A549 (cell line): ENCODE measurements at regions of chr1 and their contacts with region 1.

Region 1: DNA sequence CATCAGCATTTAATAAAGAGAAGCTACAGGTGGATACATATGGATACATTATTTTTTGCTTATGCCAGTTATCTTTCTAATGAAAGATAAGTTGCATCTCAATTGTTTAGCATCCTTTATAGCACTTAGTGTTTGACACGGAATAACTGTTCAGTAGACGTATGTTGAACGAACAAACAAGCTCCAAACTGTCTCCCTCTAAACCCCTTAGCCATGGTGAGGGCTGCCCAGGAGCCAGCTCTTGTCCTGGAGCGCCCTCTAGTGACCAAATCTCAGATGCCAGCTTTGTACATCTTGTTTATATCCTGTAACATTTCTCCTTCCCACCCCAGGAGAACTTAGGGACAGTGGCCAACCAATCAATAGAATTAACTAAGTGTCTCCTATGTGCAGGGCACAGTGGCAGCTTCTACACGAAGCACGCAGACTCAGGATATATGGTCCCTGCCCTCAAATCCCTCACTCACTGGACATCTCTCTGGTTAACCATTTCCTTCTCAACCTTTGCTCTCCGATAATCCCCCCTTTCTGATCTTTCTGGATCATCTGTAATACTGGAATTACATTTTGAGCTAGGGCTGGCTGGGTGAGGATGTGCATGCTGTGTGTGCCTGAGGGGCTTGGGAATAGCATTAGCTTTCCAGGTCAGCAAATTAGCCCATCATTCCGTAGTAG is 22.9 kb downstream of the KCNA10 start:
- DNase-seq: peak; percentile 66 to 72
- ATAC-seq: peak; percentile 87 to 97
- H3K4me3 ChIP-seq: no peak overlapping the region
- H3K27ac ChIP-seq: no peak overlapping the region
- H3K4me1 ChIP-seq: no peaks in the 10 kb centered on the region
- CTCF ChIP-seq: peak; percentile 89
- EP300 ChIP-seq: no peak
- POLR2A ChIP-seq: no peak
- RAD21 ChIP-seq: peak; percentile 91 to 97

Region 2: GRCh38 chr1:110196917-110197765 is 298.9 kb before region 1 on chr1:
- CTCF ChIA-PET with region 1: interaction called, 165 read pairs
- POLR2A ChIA-PET with region 1: no interaction called
- DNase-seq: peak; percentile 50 to 77
- ATAC-seq: peak; percentile 83 to 96
- H3K4me3 ChIP-seq: no peak overlapping the region
- H3K27ac ChIP-seq: no peak overlapping the region
- H3K4me1 ChIP-seq: no peaks in the 10 kb centered on the region
- CTCF ChIP-seq: peak; percentile 65
- EP300 ChIP-seq: no peak
- POLR2A ChIP-seq: no peak
- RAD21 ChIP-seq: peak; percentile 51 to 62

Region 3: GRCh38 chr1:110338886-110339406 is 157.1 kb before region 1 on chr1 and contains the start of gene RBM15:
- CTCF ChIA-PET with region 1: interaction called, 21 read pairs
- POLR2A ChIA-PET with region 1: no interaction called
- DNase-seq: peak; percentile 89 to 100
- ATAC-seq: peak; percentile 75 to 87
- H3K4me3 ChIP-seq: peak within 1 kb of the TSS; percentile 91
- H3K27ac ChIP-seq: peak within 1 kb of the TSS; percentile 96 to 99
- H3K4me1 ChIP-seq: peaks cover 58% of the 10 kb centered on the region
- CTCF ChIP-seq: no peak
- EP300 ChIP-seq: no peak
- POLR2A ChIP-seq: no peak
- RAD21 ChIP-seq: no peak
- polyA plus RNA-seq, gene RBM15: 14.0 and 15.0 TPM in 2 replicates

Region 4: GRCh38 chr1:110433803-110434202 is 62.3 kb before region 1 on chr1:
- CTCF ChIA-PET with region 1: interaction called, 17 read pairs
- POLR2A ChIA-PET with region 1: no interaction called
- DNase-seq: peak; percentile 54 to 64
- ATAC-seq: peak; percentile 96 to 97
- H3K4me3 ChIP-seq: no peak overlapping the region
- H3K27ac ChIP-seq: peak overlapping the region; percentile 20 to 73; a peak in 4 of 6 replicates
- H3K4me1 ChIP-seq: peaks cover 12% of the 10 kb centered on the region
- CTCF ChIP-seq: peak; percentile 11; the same call in 1 of the 3 replicates
- EP300 ChIP-seq: no peak
- POLR2A ChIP-seq: no peak
- RAD21 ChIP-seq: 0 out of 5 replicates have a peak, but pooled peaks of 1 of the 2 experiments have one; percentile 29

Region 5: GRCh38 chr1:110460253-110461220 is 35.5 kb before region 1 on chr1:
- CTCF ChIA-PET with region 1: interaction called, 256 read pairs
- POLR2A ChIA-PET with region 1: no interaction called
- DNase-seq: peak; percentile 55 to 67
- ATAC-seq: peak; percentile 60 to 83
- H3K4me3 ChIP-seq: no peak overlapping the region
- H3K27ac ChIP-seq: no peak overlapping the region
- H3K4me1 ChIP-seq: peaks cover 27% of the 10 kb centered on the region
- CTCF ChIP-seq: peak; percentile 90
- EP300 ChIP-seq: no peak
- POLR2A ChIP-seq: no peak
- RAD21 ChIP-seq: peak; percentile 94 to 97

Region 6: GRCh38 chr1:110482662-110483307 is 13.3 kb before region 1 on chr1:
- CTCF ChIA-PET with region 1: interaction called, 43 read pairs
- POLR2A ChIA-PET with region 1: interaction called, 4 read pairs
- DNase-seq: no peak
- ATAC-seq: no peak; a peak in 1 of 6 replicates
- H3K4me3 ChIP-seq: no peak overlapping the region
- H3K27ac ChIP-seq: no peak overlapping the region
- H3K4me1 ChIP-seq: peaks cover 16% of the 10 kb centered on the region
- CTCF ChIP-seq: no peak
- EP300 ChIP-seq: no peak
- POLR2A ChIP-seq: no peak
- RAD21 ChIP-seq: no peak

Region 7: DNA sequence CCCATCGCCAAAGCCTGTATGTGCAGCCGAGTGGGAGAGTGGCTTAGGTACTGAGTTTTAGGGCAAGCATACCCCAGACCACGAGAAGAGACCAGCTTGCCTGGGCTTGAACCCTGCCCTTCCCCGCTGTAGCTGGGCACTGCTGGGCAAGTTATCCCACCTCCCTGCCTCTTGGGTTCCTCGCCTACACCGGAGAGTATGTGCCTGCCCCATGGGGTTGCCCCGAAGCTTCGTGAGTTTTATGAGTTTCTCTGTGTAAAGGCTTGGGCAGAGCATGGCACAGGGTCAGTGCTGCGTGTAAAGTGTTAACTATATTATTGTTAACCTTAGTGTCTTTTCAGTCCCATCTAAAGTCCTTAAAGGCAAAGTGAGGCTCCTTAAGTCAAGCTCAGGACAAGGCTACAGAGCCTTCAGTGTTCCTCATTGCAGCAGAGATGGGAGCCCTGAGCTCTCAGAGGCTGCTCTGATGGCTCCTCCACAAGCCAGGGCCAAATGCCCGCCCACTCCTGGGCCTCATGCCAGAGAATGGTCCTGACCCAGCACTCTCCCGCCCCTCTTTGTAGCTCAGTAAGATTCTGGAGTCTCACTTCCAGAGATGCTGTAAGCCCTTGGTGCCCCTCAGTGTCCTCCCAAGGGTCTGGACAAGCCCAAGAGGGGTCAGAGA is 59.9 kb after region 1 on chr1:
- CTCF ChIA-PET with region 1: no interaction called
- POLR2A ChIA-PET with region 1: no interaction called
- DNase-seq: no peak
- ATAC-seq: peak; percentile 14 to 55; a peak in 3 of 6 replicates
- H3K4me3 ChIP-seq: peak overlapping the region; percentile 40
- H3K27ac ChIP-seq: peak overlapping the region in 1 of 2 experiments; percentile 63; a peak in 2 of 6 replicates
- H3K4me1 ChIP-seq: no peaks in the 10 kb centered on the region
- CTCF ChIP-seq: no peak
- EP300 ChIP-seq: no peak
- POLR2A ChIP-seq: no peak
- RAD21 ChIP-seq: no peak

Region 8: GRCh38 chr1:110619412-110620249 is 123.6 kb after region 1 on chr1:
- CTCF ChIA-PET with region 1: interaction called, 10 read pairs
- POLR2A ChIA-PET with region 1: no interaction called
- DNase-seq: peak; percentile 57 to 63
- ATAC-seq: peak; percentile 79 to 92; a peak in 5 of 6 replicates
- H3K4me3 ChIP-seq: no peak overlapping the region; the same call in 2 of the 3 replicates
- H3K27ac ChIP-seq: no peak overlapping the region
- H3K4me1 ChIP-seq: peaks cover 15% of the 10 kb centered on the region
- CTCF ChIP-seq: peak; percentile 66
- EP300 ChIP-seq: no peak
- POLR2A ChIP-seq: no peak
- RAD21 ChIP-seq: peak; percentile 43 to 45; a peak in 4 of 5 replicates

Region 9: DNA sequence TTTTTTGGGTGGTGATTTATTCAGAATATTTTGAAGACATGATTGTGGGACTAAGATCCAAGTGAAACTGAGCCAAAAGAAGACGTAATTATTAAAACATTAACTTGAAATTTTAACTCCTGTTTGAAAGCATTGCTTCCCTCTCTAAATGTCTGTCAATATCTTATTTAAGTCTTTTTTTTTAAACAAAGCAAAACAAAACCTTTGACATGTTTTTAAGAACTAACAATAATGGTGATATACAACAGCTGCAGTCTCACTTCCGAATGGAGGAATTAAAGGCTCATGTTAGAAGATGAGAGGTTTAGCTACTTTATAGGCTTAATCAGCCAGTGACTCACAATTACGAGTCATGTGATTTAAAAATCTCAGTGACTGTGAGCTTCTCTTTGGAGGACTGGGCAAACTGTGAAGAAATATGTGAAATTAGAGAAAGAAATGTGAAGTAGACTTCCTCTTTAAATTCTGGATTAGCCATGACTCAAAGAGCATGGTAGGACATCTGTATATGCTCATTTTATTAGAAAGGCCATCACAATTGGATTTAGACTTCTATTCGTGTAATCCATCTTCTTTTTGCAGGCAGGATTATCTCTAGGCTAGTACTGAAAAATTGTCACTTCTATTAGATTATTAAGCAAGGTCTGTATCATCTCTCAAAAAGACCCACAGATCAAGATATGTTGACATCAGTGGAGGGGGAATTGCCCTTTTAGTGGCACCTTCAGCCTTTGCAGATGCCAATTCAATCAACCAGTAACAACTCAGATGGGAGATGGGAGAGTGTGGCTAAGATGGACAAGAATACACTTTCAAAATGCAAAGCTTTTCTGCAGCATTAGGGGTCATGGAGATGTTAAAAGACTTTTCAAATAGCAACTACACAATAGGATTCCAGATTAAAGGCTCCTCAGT is 150.0 kb after region 1 on chr1:
- CTCF ChIA-PET with region 1: no interaction called
- POLR2A ChIA-PET with region 1: no interaction called
- DNase-seq: no peak
- ATAC-seq: no peak
- H3K4me3 ChIP-seq: no peak overlapping the region
- H3K27ac ChIP-seq: no peak overlapping the region
- H3K4me1 ChIP-seq: no peaks in the 10 kb centered on the region
- CTCF ChIP-seq: no peak
- EP300 ChIP-seq: no peak
- POLR2A ChIP-seq: no peak
- RAD21 ChIP-seq: no peak

Region 10: GRCh38 chr1:110948038-110948810 is 452.2 kb after region 1 on chr1:
- CTCF ChIA-PET with region 1: no interaction called
- POLR2A ChIA-PET with region 1: no interaction called
- DNase-seq: peak in 1 of 2 experiments; percentile 5
- ATAC-seq: no peak
- H3K4me3 ChIP-seq: no peak overlapping the region
- H3K27ac ChIP-seq: no peak overlapping the region
- H3K4me1 ChIP-seq: no peaks in the 10 kb centered on the region
- CTCF ChIP-seq: no peak
- EP300 ChIP-seq: no peak
- POLR2A ChIP-seq: no peak
- RAD21 ChIP-seq: no peak